Activated T-helper 2 cell treated with anti-CD3 and anti-CD28 coated beads, Interferon-gamma antibody, Interleukin-2, Interleukin-4, amounts not matched to agents 10 μg/mL and 5 μg/mL and 100 μg/mL, durations not matched to agents 14 hours and 24 hours and 36 hours (primary cell): ENCODE measurements at regions of chr2 and their contacts with region 1.

Region 1: GRCh38 chr2:6930923-6931647 is 13.9 kb downstream of the RNF144A start:
- DNase-seq: no peak
- H3K4me3 Mint-ChIP-seq: no peak overlapping the region
- H3K27ac Mint-ChIP-seq: no peak overlapping the region
- H3K4me1 Mint-ChIP-seq: peaks cover 37% of the 10 kb centered on the region
- H3K27me3 Mint-ChIP-seq: no peaks in the 10 kb centered on the region

Region 2: DNA sequence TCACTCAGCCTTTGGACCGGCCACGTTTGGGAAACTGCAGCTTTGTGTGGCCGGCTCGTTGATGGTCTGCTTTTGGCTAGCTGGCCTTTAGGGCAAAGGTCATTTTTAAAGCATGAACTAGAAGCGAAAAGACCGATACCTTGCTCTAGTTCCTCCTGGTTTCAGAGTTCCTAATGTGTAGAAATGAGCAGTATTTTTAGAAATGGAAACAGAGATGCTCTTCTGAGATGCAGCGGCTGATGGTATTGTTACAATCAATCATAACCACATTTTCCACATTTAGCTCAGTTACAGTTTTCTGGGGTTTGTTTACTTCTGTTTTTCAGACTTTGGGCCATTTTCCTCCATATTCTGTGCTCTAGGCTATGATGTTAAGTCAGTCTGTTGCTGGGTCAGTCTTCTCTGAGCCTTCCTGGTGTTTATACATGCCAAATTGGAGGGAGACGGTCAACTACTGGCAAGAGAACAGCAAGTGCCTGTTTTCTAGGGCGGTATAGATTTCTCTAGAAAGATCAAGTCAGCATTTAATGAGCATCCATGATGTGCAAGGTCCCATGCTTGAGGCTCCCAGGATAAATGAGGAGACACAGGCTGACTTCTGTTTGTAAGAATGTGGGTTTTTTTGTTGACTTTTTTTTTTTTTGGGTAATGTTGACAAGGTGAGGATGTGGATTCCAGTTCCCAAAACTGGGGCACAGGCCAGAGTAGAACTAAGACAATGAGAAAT is 14.2 kb after region 1 on chr2:
- intact Hi-C with region 1: loop called (anchors 2 kb)
- DNase-seq: no peak
- H3K4me3 Mint-ChIP-seq: peak overlapping the region; percentile 3
- H3K27ac Mint-ChIP-seq: peak overlapping the region; percentile 65
- H3K4me1 Mint-ChIP-seq: peaks cover 46% of the 10 kb centered on the region
- H3K27me3 Mint-ChIP-seq: no peaks in the 10 kb centered on the region